ENCODE measurements at regions of chr11 and their contacts with region 1.

Region 1: DNA sequence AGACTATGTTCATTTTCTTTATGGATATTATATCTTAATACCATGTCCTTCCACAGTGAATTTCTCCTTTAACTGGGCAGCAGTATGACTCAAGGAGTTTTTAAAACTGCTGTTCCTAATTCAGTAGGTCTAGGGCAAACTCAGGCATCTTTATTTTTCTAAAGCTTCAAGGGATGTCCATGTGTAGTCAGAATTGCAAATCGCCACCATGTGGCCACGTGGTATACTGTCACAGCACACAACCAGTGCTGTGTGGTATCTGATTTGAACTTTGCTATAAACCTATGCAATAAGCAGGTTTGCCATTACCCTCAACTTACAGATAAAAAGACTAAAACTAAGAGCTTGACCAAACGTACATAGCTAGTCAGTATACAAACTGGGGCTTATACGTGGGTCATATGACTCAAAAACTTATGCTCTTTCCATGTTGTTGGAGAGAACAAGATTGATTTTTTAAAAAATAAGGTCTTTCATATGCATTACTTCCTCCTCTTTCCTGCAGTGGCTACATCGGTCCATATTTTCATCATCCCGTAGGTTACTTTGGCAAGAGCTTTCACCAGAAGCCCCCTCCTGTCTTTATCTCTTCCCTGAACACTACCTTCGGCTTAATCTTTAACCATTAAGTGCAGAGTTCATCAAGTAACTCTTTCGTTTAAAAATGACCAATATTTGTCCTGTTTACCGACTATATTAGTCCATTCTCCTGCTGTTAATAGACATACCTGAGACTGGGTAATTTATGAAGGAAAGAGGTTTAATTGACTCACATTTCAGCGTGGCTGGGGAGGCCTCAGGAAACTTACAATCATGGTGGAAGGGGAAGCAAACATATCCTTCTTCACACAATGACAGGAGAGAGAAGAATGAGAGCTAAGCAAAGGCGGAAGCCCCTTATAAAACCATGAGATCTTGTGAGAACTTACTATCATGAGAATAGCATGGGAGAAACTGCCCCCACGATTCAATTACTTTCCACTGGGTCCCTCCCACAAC is 8.0 kb upstream of the HTATIP2 start:
- DNase-seq: no peak
- H3K4me3 ChIP-seq: no peak overlapping the region
- CTCF ChIP-seq: peak; percentile 58

Region 2: GRCh38 chr11:19919050-19919561 is 436.4 kb before region 1 on chr11:
- CTCF ChIA-PET with region 1: interaction called, 11 read pairs
- POLR2A ChIA-PET with region 1: no interaction called
- DNase-seq: peak; percentile 99
- H3K4me3 ChIP-seq: no peak overlapping the region
- CTCF ChIP-seq: no peak

Region 3: DNA sequence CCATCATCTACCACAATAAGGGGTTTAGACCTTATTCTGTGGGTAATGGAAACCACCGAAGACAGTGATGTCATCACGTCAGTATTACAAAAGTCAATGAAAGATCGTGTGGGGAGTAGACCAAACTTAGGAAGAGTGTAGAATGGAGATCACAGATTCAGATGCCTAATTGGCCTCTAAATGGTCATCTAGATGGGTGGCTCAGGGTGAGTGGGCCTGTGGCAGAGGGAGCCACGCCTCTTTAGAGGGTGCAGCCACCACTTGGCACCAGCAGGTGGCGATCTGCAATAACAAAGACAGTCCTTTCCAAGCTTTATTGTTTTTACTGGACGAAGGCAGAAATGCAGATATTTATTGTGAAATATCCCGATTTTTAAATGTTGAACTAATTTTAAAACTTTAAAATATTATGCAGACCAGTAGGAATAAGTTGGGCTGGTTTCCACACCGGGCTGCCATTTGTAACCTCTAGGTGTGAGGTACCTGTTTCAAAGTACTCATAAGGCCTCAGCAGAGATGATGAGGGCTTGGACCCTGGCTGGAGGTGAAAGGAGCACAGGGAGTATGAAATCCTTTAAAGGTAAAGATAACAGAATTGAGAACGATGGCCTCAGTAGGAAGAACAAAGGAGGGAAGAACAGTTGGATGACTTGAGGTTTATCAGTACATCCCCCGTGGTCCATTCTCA is 417.2 kb before region 1 on chr11:
- CTCF ChIA-PET with region 1: interaction called, 23 read pairs
- POLR2A ChIA-PET with region 1: no interaction called
- DNase-seq: no peak
- H3K4me3 ChIP-seq: no peak overlapping the region
- CTCF ChIP-seq: peak; percentile 65

Region 4: DNA sequence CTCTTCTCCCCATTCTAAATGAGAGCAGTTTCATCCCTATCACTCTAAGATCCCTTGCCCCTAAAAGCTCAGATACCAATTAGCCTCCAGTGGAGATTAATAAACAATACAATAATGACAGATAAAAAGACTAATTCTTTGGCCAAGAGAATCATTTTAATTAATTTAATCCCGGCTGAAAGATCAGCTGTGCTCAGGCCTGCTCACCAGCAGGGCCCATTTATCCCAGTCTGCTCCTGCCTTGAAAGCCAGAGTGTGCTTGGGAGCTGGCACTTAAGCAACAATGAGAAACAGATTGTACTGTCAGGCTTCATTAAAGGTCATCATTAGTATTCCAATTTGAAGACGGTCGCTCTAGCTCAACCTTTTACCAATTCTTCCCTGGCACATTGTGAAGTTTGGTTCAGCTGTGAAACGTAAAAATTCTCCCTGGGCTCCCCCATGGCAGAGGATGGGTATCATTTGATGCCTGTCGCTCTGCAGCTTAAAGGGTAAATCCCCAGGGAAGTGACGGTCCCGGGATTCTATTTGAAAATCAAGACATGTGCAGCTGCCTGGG is 28.1 kb before region 1 on chr11:
- CTCF ChIA-PET with region 1: interaction called, 12 read pairs
- POLR2A ChIA-PET with region 1: no interaction called
- DNase-seq: no peak
- H3K4me3 ChIP-seq: no peak overlapping the region
- CTCF ChIP-seq: no peak

Region 5: GRCh38 chr11:20337526-20338154 is 17.9 kb before region 1 on chr11:
- CTCF ChIA-PET with region 1: interaction called, 33 read pairs
- POLR2A ChIA-PET with region 1: no interaction called
- DNase-seq: no peak
- H3K4me3 ChIP-seq: no peak overlapping the region
- CTCF ChIP-seq: peak; percentile 31

Region 6: DNA sequence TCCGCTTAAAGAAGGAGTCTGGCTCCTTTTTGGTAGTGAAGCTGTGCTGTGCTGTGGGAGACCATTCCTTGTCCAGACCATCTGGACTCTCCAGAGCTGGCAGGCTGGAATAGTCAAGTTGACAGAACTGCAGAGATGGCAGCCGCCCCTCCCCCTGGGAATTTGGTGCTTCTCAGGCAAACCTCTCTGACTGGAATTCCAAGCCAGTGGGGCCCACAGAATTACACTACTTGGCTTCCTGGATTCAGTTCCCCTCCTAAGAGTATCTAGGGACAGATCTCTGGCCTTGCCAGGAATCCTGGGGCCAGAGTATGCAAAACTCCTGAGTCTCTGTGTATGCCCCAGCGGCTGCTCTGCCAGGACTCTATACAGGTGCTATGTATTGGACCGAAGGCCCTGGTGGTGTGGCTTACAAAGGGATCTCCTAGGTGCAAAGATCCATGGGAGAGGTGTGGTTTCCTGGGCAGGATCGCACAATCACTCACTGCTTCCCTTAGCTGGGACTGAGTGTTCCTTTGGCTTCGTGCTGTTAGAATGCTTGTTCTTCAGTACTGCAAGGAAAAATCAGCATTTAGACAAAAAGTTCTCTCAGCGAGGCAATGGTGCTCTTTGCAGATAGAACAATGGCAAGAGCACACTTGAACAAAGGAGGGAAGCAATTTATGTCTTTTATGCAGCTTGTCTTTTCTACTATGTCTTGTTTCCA is 118.8 kb after region 1 on chr11:
- CTCF ChIA-PET with region 1: no interaction called
- POLR2A ChIA-PET with region 1: no interaction called
- DNase-seq: no peak
- H3K4me3 ChIP-seq: no peak overlapping the region
- CTCF ChIP-seq: no peak

Measured in AG04449 (cell line).